HCT116 (cell line): ENCODE measurements at regions of chr22 and their contacts with region 1.

Region 1: GRCh38 chr22:22810018-22810427 is 77.6 kb upstream of the IGLL5 start:
- DNase-seq: peak; percentile 36
- ATAC-seq: peak; percentile 100
- H3K4me3 ChIP-seq: no peak overlapping the region
- H3K27ac ChIP-seq: no peak overlapping the region
- H3K4me1 ChIP-seq: no peaks in the 10 kb centered on the region
- H3K27me3 ChIP-seq: no peaks in the 10 kb centered on the region
- CTCF ChIP-seq: peak; percentile 54 to 98 (median 97); a peak in 5 of 6 replicates
- POLR2A ChIP-seq: no peak
- RAD21 ChIP-seq: peak; percentile 66

Region 2: DNA sequence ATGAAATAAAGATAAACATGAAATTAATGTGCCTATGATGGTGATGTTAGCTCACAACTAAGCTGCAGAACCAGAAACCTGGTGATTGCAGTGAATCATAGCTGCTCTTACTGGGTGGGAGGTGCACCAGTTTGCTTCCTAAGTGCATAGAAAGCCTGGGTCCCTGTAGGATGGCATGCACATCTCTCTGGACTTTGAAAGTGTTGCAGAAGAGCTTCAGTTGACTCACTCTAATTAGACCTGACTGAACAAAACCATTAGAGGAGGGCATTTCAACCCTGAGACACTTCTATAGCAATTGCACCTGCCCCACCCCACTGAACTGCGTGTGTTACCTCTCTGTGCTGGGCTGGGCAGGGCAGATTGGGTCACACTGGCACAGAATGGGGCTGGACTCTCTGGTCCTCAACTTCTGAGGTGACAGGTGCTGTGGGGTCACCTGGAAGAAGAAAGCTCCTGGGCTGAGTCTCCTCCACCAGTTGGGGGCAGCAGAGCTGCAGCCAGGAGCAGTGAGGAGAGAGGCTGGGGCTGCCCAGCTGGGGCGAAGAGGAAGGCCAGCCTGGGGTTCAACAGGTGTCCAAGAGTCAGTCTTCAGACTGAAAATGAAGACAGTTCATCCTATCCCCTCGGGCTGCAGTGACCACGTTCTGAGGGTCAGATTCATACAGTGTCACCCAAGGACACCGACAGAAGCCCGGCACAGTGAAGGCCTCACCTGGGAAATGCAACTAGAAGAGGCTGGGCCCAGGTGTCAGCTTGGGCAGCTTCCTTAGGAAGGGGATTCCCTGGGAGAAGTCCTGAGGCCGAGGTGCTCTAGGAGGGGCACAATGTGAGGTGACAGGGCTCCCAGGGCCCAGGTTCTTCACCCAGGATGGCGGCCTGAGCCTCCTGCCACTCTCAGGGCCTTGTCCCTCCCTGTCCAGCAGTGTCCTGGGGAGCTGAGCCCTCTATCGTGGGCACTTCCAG is 107.5 kb before region 1 on chr22:
- CTCF ChIA-PET with region 1: no interaction called
- POLR2A ChIA-PET with region 1: no interaction called
- RAD21 ChIA-PET with region 1: no interaction called
- intact Hi-C with region 1: no loop called
- DNase-seq: no peak
- ATAC-seq: peak; percentile 88
- H3K4me3 ChIP-seq: no peak overlapping the region
- H3K27ac ChIP-seq: no peak overlapping the region
- H3K4me1 ChIP-seq: no peaks in the 10 kb centered on the region
- H3K27me3 ChIP-seq: no peaks in the 10 kb centered on the region
- CTCF ChIP-seq: peak; percentile 11 to 66 (median 49); a peak in 4 of 6 replicates
- POLR2A ChIP-seq: no peak
- RAD21 ChIP-seq: peak; percentile 35; the same call in 1 of the 2 replicates

Region 3: DNA sequence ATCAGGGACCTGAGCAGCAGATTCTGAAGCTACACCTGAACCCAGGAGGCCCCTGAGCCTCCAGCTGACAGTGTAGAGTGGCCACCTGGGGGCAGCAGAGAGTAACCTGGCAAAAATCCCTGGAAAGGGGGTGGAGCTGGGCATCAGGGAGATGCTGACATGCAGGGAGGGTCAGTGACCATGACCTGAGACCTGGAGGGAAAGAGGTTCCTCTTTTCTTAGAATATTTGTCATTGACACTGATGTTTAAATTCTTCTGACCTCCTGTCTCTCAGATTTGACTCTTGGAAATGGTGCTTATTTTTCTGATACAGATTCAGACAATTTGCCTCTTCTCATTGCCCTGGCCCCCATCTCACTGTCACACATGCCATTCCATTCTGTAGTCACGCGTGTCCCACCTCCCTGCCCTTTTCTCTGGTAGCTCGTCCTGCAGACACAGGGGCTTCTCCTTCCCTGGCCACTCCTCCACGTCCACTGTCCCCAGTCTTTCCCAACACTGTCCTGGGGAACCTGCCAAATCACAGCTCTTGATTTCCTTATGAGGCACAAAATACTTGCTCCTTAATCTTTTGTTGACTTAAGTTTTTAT is 39.6 kb before region 1 on chr22:
- CTCF ChIA-PET with region 1: interaction called, 10 read pairs
- POLR2A ChIA-PET with region 1: no interaction called
- RAD21 ChIA-PET with region 1: no interaction called
- intact Hi-C with region 1: no loop called
- DNase-seq: no peak
- ATAC-seq: peak; percentile 96
- H3K4me3 ChIP-seq: no peak overlapping the region
- H3K27ac ChIP-seq: no peak overlapping the region
- H3K4me1 ChIP-seq: no peaks in the 10 kb centered on the region
- H3K27me3 ChIP-seq: peaks cover 8% of the 10 kb centered on the region; the same call in 1 of the 2 replicates
- CTCF ChIP-seq: peak; percentile 59 to 94 (median 90); a peak in 5 of 6 replicates
- POLR2A ChIP-seq: no peak
- RAD21 ChIP-seq: peak; percentile 38; the same call in 1 of the 2 replicates